Ovary (tissue), 10 donors: ENCODE measurements at regions of chr7 and their contacts with region 1.

Region 1: DNA sequence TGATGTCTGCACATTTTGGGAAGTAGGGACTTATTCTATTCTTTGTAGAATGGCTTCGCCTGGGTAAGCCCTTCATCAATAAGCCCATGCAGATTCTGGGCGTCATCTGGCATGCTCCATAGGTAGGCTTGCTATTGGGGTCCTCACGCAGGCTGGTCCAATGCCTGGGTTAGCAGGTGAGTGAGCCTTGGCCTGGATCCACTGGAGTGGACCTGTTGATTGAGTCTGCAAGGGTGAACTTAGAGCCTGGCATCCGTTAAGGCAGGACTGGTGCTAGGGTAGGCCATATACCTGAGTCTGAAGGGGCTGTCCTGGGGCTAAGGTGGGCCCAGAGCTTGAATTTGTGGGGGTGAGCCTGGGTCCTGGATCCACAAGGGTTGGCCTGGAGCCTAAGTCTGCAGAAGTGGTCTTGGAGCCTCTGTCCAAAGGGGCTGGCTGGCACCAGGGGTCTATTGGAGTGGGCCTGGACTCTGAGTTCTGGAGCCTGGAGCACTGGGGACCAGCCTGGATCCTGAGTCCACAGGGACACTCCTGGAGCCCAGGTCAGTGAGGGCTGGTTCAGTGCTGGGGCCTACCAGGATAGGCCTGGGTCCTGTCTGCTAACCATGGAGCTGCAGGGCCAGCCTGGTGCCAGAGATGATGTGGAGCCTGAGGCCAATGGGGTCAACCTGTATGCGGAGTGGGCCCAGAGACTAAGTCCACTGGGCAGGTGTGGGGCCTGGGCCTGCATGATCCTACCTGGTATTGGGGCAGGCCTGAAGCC is 297.7 kb downstream of the PTPRN2 start:
- DNase-seq: no peak
- H3K4me3 ChIP-seq: no peak overlapping the region
- H3K27ac ChIP-seq: no peak overlapping the region
- H3K4me1 ChIP-seq: no peaks in the 10 kb centered on the region
- H3K27me3 ChIP-seq: no peaks in the 10 kb centered on the region
- CTCF ChIP-seq: no peak
- EP300 ChIP-seq: no peak
- POLR2A ChIP-seq: no peak

Region 2: GRCh38 chr7:158353606-158354570 is 63.9 kb after region 1 on chr7:
- intact Hi-C with region 1: loop called in 1 of 4 experiments (anchors 10 kb)
- DNase-seq: no peak
- H3K4me3 ChIP-seq: no peak overlapping the region
- H3K27ac ChIP-seq: no peak overlapping the region
- H3K4me1 ChIP-seq: no peaks in the 10 kb centered on the region
- H3K27me3 ChIP-seq: no peaks in the 10 kb centered on the region
- CTCF ChIP-seq: no peak
- EP300 ChIP-seq: no peak
- POLR2A ChIP-seq: no peak